Panc1 (cell line): ENCODE measurements at regions of chr2 and their contacts with region 1.

Region 1: DNA sequence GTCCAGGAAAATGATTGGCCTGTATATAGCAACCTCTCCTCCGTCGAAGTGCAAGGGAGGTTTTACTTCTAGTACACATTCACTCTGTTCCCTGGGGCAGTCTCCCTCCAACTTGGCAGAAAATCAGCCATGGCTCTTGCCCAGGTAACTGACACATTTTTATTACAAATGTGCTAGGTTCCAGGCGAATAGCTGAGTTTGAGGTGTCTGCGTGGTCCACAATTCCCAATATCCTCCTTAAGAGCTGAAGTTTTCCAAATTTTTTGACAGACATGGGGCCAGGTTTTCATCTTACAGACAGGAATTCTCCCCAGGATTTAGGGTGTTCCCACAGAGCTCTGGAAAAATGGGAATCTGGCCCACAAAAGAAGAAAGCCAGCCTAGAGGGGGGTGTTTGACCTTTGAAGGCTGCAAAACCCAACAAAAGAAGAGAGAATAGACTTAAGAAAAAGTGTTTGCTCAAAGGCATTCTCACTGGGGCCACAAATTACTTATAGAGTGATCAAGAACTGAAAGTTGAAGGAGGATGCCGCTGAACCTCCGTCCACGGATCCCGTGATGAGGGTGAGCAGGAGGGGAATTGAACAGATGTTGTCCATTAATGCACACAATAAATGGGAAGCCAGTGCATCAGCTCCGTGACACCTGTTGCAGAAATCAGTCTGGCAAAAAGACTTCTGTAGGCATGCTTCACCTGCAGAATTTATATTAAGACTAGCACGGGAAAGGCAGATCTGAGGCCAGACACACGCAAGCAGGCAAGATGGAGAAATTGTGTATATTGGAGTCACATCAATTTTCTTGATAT is 242.3 kb upstream of the COPS8 start:
- DNase-seq: no peak
- ATAC-seq: no peak
- H3K4me3 ChIP-seq: no peak overlapping the region
- H3K27ac ChIP-seq: no peak overlapping the region
- H3K4me1 ChIP-seq: no peaks in the 10 kb centered on the region
- H3K27me3 ChIP-seq: peaks cover 7% of the 10 kb centered on the region
- CTCF ChIP-seq: no peak

Region 2: GRCh38 chr2:236558993-236559978 is 284.1 kb before region 1 on chr2:
- CTCF ChIA-PET with region 1: no interaction called
- POLR2A ChIA-PET with region 1: no interaction called
- in situ Hi-C with region 1: no loop called
- intact Hi-C with region 1: no loop called
- DNase-seq: no peak
- ATAC-seq: no peak
- H3K4me3 ChIP-seq: no peak overlapping the region
- H3K27ac ChIP-seq: no peak overlapping the region
- H3K4me1 ChIP-seq: no peaks in the 10 kb centered on the region
- H3K27me3 ChIP-seq: peaks cover 8% of the 10 kb centered on the region
- CTCF ChIP-seq: no peak

Region 3: DNA sequence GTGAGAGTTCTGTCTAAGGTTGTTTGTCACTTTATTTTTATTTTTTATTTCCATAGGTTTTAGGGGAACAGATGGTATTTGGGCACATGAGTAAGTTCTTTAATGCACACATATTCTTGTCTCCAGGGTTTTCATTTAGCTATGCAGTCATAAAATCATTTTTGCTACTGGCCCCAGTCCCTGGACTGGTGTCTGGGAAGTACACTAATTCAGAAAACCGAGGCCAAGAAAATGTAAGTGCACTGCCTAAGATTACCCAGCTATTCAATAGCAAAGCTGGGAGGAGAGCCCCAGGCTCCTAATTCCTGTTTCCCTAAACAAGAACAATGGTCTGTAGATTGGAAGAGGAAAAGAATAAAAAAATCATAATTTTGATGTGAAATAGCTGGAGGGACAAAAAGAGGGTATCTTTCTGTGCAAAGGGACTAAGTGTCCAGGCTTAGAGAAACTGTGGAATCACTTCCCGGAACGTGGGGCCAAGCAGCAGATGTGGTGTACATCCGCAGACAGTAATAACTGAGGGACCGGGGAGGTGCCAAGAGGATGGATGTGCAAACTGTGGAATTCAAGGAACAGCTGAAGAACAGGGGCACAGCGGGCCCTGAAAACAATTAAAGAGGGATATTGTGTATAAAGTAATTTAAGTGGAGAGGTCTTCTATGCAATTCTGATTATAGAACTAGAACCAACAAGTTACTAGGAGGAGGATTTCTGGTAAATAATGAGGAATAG is 37.4 kb before region 1 on chr2:
- CTCF ChIA-PET with region 1: no interaction called
- POLR2A ChIA-PET with region 1: interaction called, 14 read pairs
- in situ Hi-C with region 1: no loop called
- intact Hi-C with region 1: no loop called
- DNase-seq: no peak
- ATAC-seq: no peak
- H3K4me3 ChIP-seq: no peak overlapping the region
- H3K27ac ChIP-seq: no peak overlapping the region
- H3K4me1 ChIP-seq: no peaks in the 10 kb centered on the region
- H3K27me3 ChIP-seq: no peaks in the 10 kb centered on the region; the same call in 1 of the 2 replicates
- CTCF ChIP-seq: no peak